GM10248 (cell line): ENCODE measurements at regions of chr14 and their contacts with region 1.

Region 1: GRCh38 chr14:69766984-69767368 is at the start of gene SRSF5:
- DNase-seq: peak; percentile 92
- CTCF ChIP-seq: no peak

Region 2: GRCh38 chr14:69749956-69750355 is 17.0 kb before region 1 on chr14:
- CTCF ChIA-PET with region 1: interaction called, 10 read pairs
- POLR2A ChIA-PET with region 1: no interaction called
- DNase-seq: no peak
- CTCF ChIP-seq: no peak